ENCODE measurements at regions of chr1 and their contacts with region 1.

Region 1: GRCh38 chr1:179081687-179082332 is at the start of gene TOR3A:
- DNase-seq: peak; percentile 94 to 95 (median 95)
- ATAC-seq: peak; percentile 97 to 99 (median 98)
- H3K4me3 ChIP-seq: peak within 1 kb of the TSS; percentile 72 to 100 (median 92)
- H3K27ac ChIP-seq: peak within 1 kb of the TSS; percentile 68 to 93 (median 89)
- H3K4me1 ChIP-seq: peaks cover 0 to 31% (median 16%) of the 10 kb centered on the region in 12 donors
- H3K27me3 ChIP-seq: no peaks in the 10 kb centered on the region
- CTCF ChIP-seq: peak in 1 of 12 donors; percentile 13
- POLR2A ChIP-seq: peak in 1 of 2 donors; percentile 91
- total RNA-seq, gene TOR3A: 6.3 to 22.4 (median 9.9) TPM

Region 2: GRCh38 chr1:179129702-179130473 is 48.1 kb after region 1 on chr1:
- intact Hi-C with region 1: loop called in 1 of 10 experiments (anchors 5 kb)
- DNase-seq: no peak
- ATAC-seq: peak; percentile 52 to 77 (median 58)
- H3K4me3 ChIP-seq: peak overlapping the region in 10 of 12 donors; percentile 26 to 52 (median 38)
- H3K27ac ChIP-seq: peak overlapping the region; percentile 6 to 90 (median 62)
- H3K4me1 ChIP-seq: peaks cover 0 to 51% (median 15%) of the 10 kb centered on the region in 12 donors
- H3K27me3 ChIP-seq: no peaks in the 10 kb centered on the region
- CTCF ChIP-seq: no peak
- POLR2A ChIP-seq: no peak

Region 3: GRCh38 chr1:179190861-179191260 is 109.1 kb after region 1 on chr1:
- intact Hi-C with region 1: loop called in 9 of 10 experiments (anchors 1 to 5 kb)
- DNase-seq: peak in 4 of 5 donors; percentile 39 to 56 (median 46)
- ATAC-seq: peak; percentile 65 to 94 (median 82)
- H3K4me3 ChIP-seq: peak overlapping the region in 1 of 12 donors; percentile 9
- H3K27ac ChIP-seq: peak overlapping the region in 11 of 12 donors; percentile 17 to 88 (median 75)
- H3K4me1 ChIP-seq: peaks cover 0 to 28% (median 0%) of the 10 kb centered on the region in 12 donors
- H3K27me3 ChIP-seq: no peaks in the 10 kb centered on the region
- CTCF ChIP-seq: no peak
- POLR2A ChIP-seq: no peak

Region 4: GRCh38 chr1:179197690-179198297 is 116.0 kb after region 1 on chr1:
- intact Hi-C with region 1: loop called in 9 of 10 experiments (anchors 1 to 5 kb)
- DNase-seq: no peak
- ATAC-seq: peak in 2 of 4 donors; percentile 50 to 64
- H3K4me3 ChIP-seq: no peak overlapping the region
- H3K27ac ChIP-seq: no peak overlapping the region
- H3K4me1 ChIP-seq: peaks cover 0 to 11% (median 0%) of the 10 kb centered on the region in 12 donors
- H3K27me3 ChIP-seq: no peaks in the 10 kb centered on the region
- CTCF ChIP-seq: no peak
- POLR2A ChIP-seq: no peak

Region 5: GRCh38 chr1:179809506-179810366 is 727.9 kb after region 1 on chr1:
- intact Hi-C with region 1: loop called in 1 of 10 experiments (anchors 10 kb)
- DNase-seq: peak in 4 of 5 donors; percentile 58 to 63 (median 61)
- ATAC-seq: peak in 3 of 4 donors; percentile 56 to 70 (median 69)
- H3K4me3 ChIP-seq: no peak overlapping the region
- H3K27ac ChIP-seq: no peak overlapping the region
- H3K4me1 ChIP-seq: peaks cover 0 to 14% (median 7%) of the 10 kb centered on the region in 12 donors
- H3K27me3 ChIP-seq: peaks cover 0 to 29% (median 0%) of the 10 kb centered on the region in 9 donors
- CTCF ChIP-seq: peak; percentile 80 to 93 (median 91)
- POLR2A ChIP-seq: no peak

Measured in heart left ventricle (tissue), 16 donors.